Gastrocnemius medialis (tissue), 4 donors: ENCODE measurements at regions of chr19 and their contacts with region 1.

Region 1: GRCh38 chr19:44164673-44165512 is at the start of gene ZNF226:
- DNase-seq: peak; percentile 94
- ATAC-seq: peak; percentile 100
- H3K4me3 ChIP-seq: peak within 1 kb of the TSS; percentile 86 to 95 (median 88)
- H3K27ac ChIP-seq: peak within 1 kb of the TSS; percentile 79 to 86 (median 84)
- H3K4me1 ChIP-seq: peaks cover 7 to 13% of the 10 kb centered on the region in 2 donors
- H3K27me3 ChIP-seq: no peaks in the 10 kb centered on the region
- CTCF ChIP-seq: no peak
- POLR2A ChIP-seq: peak in 1 of 2 donors; percentile 53
- total RNA-seq, gene ZNF226: 3.2 to 6.9 (median 3.8) TPM

Region 2: DNA sequence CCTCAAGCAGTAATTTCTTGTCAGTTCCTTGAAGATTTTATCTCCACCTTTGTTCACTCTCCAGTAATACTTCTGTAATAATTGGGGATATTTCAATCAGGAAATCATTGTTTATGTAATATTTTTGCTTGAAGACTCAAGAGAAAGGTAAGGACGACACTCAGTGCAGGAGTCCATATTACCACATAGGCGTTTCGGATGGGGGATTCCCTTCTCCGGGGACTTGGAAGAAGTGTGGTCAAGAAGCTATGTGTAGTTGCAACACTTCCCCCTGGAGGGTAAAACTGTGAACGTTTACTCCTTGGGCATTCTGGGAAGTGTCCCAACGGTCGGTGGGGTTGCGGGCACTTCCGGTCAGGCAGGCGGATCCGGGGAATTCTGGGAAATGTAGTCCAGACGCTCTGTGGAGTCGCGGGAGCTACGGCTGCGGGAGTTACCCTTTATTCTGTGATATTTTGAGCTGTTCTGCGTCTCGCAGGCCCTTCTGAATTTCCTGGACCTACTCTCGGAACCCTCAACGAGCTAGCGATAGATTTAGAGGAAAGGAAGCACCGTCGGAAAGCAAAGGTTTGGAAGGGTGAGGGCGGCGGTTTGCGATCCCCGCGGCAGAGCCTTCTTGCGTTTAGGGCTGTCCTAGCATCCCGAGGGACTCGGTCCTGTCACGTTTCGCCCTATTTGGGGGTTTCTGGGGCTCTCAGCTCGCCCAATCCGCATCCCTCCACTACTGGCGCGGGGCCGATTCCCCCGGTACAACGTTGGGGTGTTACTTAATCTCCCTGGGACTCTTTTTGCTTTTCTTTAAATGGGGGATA is 213.9 kb before region 1 on chr19 and contains the start of gene ZNF221:
- in situ Hi-C with region 1: no loop called
- intact Hi-C with region 1: loop called (anchors 1 kb)
- DNase-seq: peak; percentile 87 to 90
- ATAC-seq: peak; percentile 100
- H3K4me3 ChIP-seq: peak within 1 kb of the TSS; percentile 70 to 97 (median 84)
- H3K27ac ChIP-seq: peak within 1 kb of the TSS; percentile 66 to 80 (median 74)
- H3K4me1 ChIP-seq: peaks cover 0 to 3% of the 10 kb centered on the region in 2 donors
- H3K27me3 ChIP-seq: no peaks in the 10 kb centered on the region
- CTCF ChIP-seq: peak in 4 of 5 experiments; percentile 19 to 48 (median 38)
- POLR2A ChIP-seq: no peak
- total RNA-seq, gene ZNF221: 0.76 to 15.3 (median 0.96) TPM

Region 3: GRCh38 chr19:44071824-44072542 is 92.9 kb before region 1 on chr19 and contains the start of gene ZNF284:
- in situ Hi-C with region 1: no loop called
- intact Hi-C with region 1: loop called (anchors 5 kb)
- DNase-seq: peak; percentile 82 to 87
- ATAC-seq: peak; percentile 100
- H3K4me3 ChIP-seq: peak within 1 kb of the TSS; percentile 60 to 83 (median 77)
- H3K27ac ChIP-seq: peak within 1 kb of the TSS; percentile 56 to 79 (median 59)
- H3K4me1 ChIP-seq: peaks cover 10 to 13% of the 10 kb centered on the region in 2 donors
- H3K27me3 ChIP-seq: no peaks in the 10 kb centered on the region
- CTCF ChIP-seq: no peak
- POLR2A ChIP-seq: peak in 1 of 2 donors; percentile 20
- total RNA-seq, gene ZNF284: 0.38 to 1.3 (median 0.63) TPM

Region 4: DNA sequence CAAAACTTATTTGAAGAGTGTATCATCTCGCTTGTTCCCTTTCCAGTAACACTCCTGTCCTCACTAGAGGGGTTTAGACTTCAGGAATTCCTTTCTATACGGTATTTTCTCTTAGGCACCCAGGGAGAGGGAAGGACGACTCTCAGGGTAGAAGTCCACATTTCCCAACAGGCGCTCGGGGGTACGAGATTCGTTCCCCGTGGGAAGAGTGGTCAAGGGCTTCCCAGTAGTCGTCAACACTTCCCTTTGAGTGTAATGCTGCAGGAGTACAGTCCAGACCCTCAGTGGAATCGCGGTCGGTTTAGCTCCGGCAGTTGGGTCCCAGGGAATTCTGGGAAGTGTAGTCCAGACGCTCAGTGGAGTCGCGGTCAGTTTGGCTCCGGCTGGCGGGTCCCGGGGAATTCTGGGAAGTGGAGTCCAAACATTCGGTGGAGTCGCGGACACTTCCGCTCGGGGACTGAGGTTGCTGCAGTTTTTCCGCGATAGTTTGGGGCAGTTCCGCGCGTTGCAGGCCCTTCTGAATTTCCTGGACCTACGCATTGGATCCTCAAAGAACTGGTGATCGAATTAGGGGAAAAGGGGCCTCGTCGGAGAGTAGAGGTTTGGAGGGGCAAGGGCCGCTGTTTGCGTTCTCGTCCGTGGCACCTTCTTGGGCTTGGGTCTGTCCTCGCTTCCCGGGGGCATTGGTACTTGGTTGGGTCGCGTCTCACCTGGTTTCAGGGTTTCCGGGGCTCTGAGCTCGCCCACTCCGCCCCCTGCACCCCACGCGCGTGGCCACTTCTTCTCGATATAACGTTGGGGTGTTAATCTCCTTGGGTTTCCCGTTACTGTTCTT is 70.7 kb before region 1 on chr19 and contains the start of gene ZNF224:
- in situ Hi-C with region 1: no loop called
- intact Hi-C with region 1: loop called (anchors 5 kb)
- DNase-seq: peak; percentile 85 to 87
- ATAC-seq: peak; percentile 100
- H3K4me3 ChIP-seq: peak within 1 kb of the TSS; percentile 76 to 91 (median 80)
- H3K27ac ChIP-seq: peak within 1 kb of the TSS; percentile 70 to 82 (median 73)
- H3K4me1 ChIP-seq: peaks cover 7 to 10% of the 10 kb centered on the region in 2 donors
- H3K27me3 ChIP-seq: no peaks in the 10 kb centered on the region
- CTCF ChIP-seq: no peak
- POLR2A ChIP-seq: peak in 1 of 2 donors; percentile 41
- total RNA-seq, gene ZNF224: 4.9 to 14.1 (median 6.9) TPM

Region 5: DNA sequence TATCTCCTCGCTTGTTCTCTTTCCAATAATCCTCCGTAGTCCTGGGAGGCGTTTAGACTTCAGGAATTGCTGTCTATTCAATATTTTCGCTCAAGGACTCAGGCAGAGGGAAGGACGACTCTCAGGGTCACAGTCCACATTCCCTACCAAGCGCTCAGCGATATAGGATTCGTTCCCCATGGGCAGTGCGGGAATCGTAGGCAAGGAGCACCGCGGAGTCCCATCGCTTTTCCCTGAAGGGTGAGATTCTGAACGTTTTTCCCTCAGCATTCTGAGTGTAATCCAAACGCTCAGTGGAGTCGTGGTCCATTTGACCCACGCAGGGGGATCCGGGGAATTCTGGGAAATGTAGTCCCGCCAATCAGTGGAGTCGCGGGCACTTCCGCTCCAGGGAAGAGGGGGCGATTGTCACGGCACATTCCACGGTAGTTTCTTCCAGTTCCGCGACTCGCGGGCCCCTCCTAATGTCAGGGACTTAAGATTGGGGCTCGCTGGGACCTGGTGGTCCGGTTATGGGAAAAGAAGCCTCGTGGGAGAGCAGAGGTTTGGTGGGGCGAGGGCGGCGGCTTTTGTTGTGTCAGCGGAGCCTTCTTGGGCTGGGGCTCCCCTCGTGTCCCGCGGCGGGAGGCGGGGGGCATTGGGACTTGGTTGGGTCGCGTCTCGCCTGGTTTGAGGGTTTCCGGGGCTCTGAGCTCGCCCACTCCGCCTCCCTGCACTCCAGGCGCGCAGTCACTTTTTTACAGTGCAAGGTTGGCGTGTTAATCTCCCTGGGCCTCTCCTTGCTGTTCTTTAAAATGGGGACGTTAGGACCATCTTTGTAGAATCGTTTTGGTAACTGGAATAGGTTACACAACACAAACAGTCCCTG is 23.5 kb before region 1 on chr19 and contains the start of gene ZNF234:
- in situ Hi-C with region 1: no loop called
- intact Hi-C with region 1: loop called (anchors 1 kb)
- DNase-seq: peak; percentile 78
- ATAC-seq: peak; percentile 98 to 99
- H3K4me3 ChIP-seq: peak within 1 kb of the TSS; percentile 85 to 98 (median 88)
- H3K27ac ChIP-seq: peak within 1 kb of the TSS; percentile 78 to 87 (median 82)
- H3K4me1 ChIP-seq: peaks cover 14 to 18% of the 10 kb centered on the region in 2 donors
- H3K27me3 ChIP-seq: no peaks in the 10 kb centered on the region
- CTCF ChIP-seq: no peak
- POLR2A ChIP-seq: peak in 1 of 2 donors; percentile 42
- total RNA-seq, gene ZNF234: 2.2 to 3.5 (median 2.9) TPM

Region 6: DNA sequence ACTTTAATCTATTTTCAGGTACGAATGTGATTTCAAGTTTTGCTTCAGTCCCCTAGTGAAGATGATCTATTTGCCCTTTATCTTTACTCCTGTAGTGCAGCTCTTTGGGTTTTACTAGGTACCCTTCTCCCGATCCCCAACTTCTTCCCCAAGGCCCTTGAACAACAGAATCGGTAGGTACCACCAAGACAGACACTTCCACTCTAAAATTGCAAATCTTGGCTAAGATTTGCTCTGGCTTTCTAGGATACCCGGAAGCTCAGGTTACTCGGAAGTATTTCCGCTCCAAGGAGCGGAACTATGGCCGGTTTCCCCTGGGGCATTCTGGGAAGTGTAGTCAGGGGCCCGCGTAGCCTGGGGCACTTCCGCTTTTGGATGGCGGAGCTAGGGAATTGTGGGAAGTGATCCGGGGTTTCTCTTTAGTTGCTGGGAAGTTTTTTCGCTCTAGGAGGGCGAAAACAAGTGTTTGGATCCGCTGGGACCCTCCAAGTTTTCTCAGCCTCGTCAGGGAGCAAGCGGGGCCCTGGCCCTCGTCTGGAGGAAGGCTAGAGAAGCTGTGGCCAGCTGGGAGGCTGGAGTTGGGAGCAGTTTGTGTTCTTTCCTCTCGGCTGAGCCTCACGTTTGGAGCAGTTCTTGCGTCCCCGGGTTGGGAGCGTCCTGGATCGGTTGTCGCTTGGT is 42.4 kb after region 1 on chr19:
- in situ Hi-C with region 1: loop called in 1 of 4 experiments (anchors 10 kb)
- intact Hi-C with region 1: loop called (anchors 1 kb)
- DNase-seq: peak; percentile 75 to 84
- ATAC-seq: peak; percentile 91 to 92
- H3K4me3 ChIP-seq: peak overlapping the region; percentile 58 to 88 (median 78)
- H3K27ac ChIP-seq: peak overlapping the region; percentile 79 to 87 (median 82)
- H3K4me1 ChIP-seq: peaks cover 4 to 7% of the 10 kb centered on the region in 2 donors
- H3K27me3 ChIP-seq: no peaks in the 10 kb centered on the region
- CTCF ChIP-seq: no peak
- POLR2A ChIP-seq: peak in 1 of 2 donors; percentile 28

Region 7: GRCh38 chr19:44304659-44305193 is 139.8 kb after region 1 on chr19 and contains the start of gene ZNF235:
- in situ Hi-C with region 1: no loop called
- intact Hi-C with region 1: loop called (anchors 2 kb)
- DNase-seq: peak; percentile 88 to 94
- ATAC-seq: peak; percentile 100
- H3K4me3 ChIP-seq: peak within 1 kb of the TSS; percentile 64 to 86 (median 78)
- H3K27ac ChIP-seq: peak within 1 kb of the TSS; percentile 77 to 87 (median 82)
- H3K4me1 ChIP-seq: peaks cover 3 to 12% of the 10 kb centered on the region in 2 donors
- H3K27me3 ChIP-seq: no peaks in the 10 kb centered on the region
- CTCF ChIP-seq: no peak
- POLR2A ChIP-seq: peak in 1 of 2 donors; percentile 42
- total RNA-seq, gene ZNF235: 1.9 to 3.3 (median 2.1) TPM